ENCODE measurements at regions of chr12 and their contacts with region 1.

Region 1: DNA sequence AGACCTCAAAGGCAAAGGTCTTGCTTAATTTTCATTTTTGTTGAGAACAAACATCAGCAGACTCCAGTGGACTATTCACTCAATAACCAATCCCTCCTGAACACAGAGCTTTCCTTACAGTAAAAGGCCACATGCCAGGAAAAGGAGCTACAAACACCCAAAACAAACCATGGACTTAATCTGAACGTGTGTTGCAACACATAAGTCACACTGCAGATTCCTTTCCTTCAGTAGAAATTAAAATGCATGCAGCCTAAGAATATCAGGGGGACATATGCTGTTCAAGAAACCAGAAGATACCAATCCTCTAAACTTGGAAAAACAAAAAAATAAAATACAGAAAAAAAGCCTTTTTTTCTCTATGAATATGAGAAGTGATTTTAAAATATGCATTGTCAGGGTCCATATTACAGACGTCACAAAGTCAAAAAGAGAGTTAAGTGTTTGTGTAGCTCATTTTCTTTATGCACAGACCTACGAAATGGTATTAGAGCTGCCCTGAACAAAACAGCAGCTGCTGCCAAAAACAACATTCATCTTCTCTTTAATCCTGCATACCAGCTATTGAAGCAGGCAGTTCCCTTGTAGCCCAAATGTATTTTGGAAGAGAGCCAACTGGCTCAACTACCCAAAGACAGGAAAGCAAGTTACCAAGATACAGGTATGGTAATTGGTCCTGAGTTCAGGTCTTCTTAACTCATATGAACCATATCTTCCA is 26.2 kb downstream of the KITLG start:
- DNase-seq: peak; percentile 26 to 54
- H3K4me3 ChIP-seq: no peak overlapping the region
- H3K27ac ChIP-seq: no peak overlapping the region
- H3K4me1 ChIP-seq: peaks cover 23% of the 10 kb centered on the region; the same call in 1 of the 2 replicates
- H3K27me3 ChIP-seq: no peaks in the 10 kb centered on the region
- CTCF ChIP-seq: no peak

Region 2: DNA sequence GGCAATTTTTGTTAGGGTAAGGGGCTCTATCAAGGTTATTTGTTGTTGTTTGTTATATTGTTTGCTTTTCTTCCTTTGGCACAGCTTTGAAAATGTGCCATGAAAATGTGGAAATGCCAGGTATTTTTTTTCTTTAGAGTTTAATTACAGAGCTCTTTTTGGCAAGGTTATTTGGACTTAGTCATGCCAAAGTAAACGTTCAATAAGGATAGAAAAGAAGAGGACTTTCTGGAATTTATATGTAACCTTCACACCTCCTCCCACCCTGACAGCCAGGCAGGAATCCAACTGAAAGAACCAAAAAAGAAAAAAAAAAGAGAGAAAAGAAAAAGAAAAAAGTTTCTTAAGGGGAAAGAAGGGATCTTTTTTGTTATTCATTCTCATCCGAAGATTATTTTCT is 191.7 kb before region 1 on chr12:
- CTCF ChIA-PET with region 1: interaction called, 13 read pairs
- POLR2A ChIA-PET with region 1: no interaction called
- intact Hi-C with region 1: no loop called
- DNase-seq: no peak
- H3K4me3 ChIP-seq: no peak overlapping the region
- H3K27ac ChIP-seq: no peak overlapping the region
- H3K4me1 ChIP-seq: peaks cover 16% of the 10 kb centered on the region
- H3K27me3 ChIP-seq: no peaks in the 10 kb centered on the region
- CTCF ChIP-seq: no peak

Region 3: GRCh38 chr12:88934163-88934747 is 380.2 kb after region 1 on chr12:
- CTCF ChIA-PET with region 1: no interaction called
- POLR2A ChIA-PET with region 1: interaction called, 12 read pairs
- intact Hi-C with region 1: no loop called
- DNase-seq: peak in 1 of 2 experiments; percentile 50
- H3K4me3 ChIP-seq: no peak overlapping the region
- H3K27ac ChIP-seq: no peak overlapping the region
- H3K4me1 ChIP-seq: 0 out of 2 replicates have a peak, but pooled peaks cover 3% of the 10 kb centered on the region
- H3K27me3 ChIP-seq: no peaks in the 10 kb centered on the region
- CTCF ChIP-seq: no peak